Activated T-helper 2 cell treated with anti-CD3 and anti-CD28 coated beads, Interferon-gamma antibody, Interleukin-2, Interleukin-4, amounts not matched to agents 10 μg/mL and 5 μg/mL and 100 μg/mL, durations not matched to agents 14 hours and 24 hours and 36 hours (primary cell): ENCODE measurements at regions of chr5 and their contacts with region 1.

Region 1: DNA sequence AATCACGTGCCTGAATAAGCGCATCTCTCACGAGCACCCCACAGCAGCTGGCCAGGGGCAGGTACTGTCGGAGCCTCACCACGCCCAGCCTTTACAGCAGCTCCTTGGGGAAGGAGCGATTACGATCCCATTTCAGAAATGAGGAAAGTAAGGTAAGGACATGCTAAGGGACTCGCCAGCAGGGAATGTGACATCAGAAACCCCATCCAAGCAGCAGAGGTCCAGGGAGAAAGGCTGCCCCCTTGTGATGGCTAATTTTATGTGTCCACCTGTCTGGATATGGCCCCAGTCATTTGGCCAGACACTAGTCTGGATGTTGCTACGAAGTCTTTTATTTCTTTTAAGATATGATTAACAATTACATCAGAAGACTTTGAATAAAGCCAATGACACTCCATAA is 77.3 kb downstream of the UBE2QL1 start:
- DNase-seq: no peak
- H3K4me3 Mint-ChIP-seq: no peak overlapping the region
- H3K27ac Mint-ChIP-seq: no peak overlapping the region
- H3K4me1 Mint-ChIP-seq: no peaks in the 10 kb centered on the region
- H3K27me3 Mint-ChIP-seq: peaks cover 2% of the 10 kb centered on the region

Region 2: DNA sequence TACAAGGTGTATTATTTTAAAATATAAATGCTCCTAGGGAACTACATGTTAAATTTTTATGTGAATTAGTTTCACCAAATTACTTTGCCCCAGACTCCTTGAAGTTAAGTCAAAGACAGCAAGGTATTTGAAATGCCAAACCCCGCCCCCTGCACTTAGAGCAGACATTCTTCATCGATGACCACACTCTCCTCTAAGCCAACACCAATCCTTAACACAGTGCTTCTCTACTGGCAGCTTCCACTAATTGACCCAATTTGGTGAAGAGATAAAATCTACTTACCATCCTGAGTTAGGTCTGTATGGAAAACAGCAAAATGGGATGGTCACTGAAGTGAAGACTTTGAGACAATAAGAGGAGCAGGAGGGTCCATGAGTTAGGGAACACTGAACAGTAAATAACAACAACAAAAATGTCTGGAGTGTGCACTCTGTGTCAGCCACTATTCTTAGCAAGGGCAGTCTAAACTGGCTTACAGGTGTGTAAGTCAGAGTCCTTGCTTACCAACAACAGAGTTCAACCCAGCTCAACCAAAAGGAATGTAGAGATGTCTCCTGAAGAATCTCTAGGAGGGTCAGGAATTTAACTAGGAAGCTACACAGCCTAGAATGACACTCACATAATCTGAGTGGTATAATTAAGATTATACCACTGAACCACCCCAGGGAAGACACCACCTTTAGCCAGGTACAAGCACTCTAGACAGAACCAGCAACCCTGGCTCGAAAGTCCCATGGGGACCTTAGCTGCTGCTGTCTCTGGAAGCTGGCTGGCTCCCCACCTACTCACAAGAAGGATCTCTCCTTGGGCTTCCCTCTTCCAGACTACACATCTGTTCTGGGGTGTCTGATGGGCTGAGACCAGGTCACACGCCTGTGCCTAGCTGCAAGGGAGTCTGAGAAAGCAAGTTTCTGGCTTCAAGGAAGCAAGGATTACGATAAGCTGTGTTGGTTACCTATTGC is 86.0 kb before region 1 on chr5:
- intact Hi-C with region 1: loop called (anchors 5 kb)
- DNase-seq: no peak
- H3K4me3 Mint-ChIP-seq: no peak overlapping the region
- H3K27ac Mint-ChIP-seq: no peak overlapping the region
- H3K4me1 Mint-ChIP-seq: no peaks in the 10 kb centered on the region
- H3K27me3 Mint-ChIP-seq: peaks cover 14% of the 10 kb centered on the region